Ascending aorta (tissue), 2 donors: ENCODE measurements at regions of chr17 and their contacts with region 1.

Region 1: DNA sequence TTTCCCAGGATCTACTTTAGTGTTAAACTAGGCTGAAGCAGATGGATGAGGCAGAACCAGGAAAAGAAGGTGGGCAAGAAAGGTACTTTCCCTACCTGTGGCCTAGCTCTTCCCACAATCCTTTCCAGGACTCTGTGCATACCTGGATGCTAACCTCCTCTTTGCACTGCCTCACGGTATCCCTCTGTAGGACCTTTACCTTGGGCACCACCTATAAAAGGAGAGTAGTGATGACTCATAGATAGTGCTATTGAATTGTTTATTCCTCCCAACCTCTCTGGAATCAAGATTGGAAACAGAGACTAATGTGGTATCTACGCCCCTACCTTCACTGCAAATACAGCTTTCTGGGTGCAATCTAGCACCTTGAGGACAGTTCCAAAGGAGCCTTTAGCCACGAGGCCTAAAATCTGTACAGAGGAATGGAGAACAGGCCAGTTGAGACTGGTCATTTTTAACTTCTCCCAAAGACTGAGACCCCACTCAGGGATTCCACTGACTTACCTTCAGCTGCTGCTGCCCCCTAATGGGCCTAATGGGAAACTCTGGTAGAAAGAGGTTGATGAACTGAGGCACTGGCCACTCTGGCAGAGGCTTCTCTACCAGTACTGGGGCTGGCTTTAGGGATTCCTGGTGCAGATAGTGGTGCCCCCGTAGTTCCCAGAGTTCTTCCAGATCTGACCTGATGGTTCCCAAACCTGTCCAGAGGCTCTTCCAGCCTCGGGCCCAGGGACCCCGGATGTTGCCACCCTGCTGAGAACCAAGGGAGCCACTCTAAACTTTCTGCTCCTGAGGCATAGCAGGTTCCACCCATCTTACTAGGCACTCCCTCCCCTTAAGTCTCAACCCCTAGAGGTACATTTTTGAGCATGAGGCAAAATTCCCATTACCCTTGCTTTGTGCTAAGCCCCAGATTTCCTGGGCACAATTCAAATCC is 781 bp downstream of the RSKR start:
- DNase-seq: no peak
- H3K4me3 ChIP-seq: no peak overlapping the region
- H3K27ac ChIP-seq: no peak overlapping the region
- H3K4me1 ChIP-seq: no peaks in the 10 kb centered on the region
- H3K27me3 ChIP-seq: no peaks in the 10 kb centered on the region
- CTCF ChIP-seq: peak; percentile 43 to 67 (median 46)

Region 2: DNA sequence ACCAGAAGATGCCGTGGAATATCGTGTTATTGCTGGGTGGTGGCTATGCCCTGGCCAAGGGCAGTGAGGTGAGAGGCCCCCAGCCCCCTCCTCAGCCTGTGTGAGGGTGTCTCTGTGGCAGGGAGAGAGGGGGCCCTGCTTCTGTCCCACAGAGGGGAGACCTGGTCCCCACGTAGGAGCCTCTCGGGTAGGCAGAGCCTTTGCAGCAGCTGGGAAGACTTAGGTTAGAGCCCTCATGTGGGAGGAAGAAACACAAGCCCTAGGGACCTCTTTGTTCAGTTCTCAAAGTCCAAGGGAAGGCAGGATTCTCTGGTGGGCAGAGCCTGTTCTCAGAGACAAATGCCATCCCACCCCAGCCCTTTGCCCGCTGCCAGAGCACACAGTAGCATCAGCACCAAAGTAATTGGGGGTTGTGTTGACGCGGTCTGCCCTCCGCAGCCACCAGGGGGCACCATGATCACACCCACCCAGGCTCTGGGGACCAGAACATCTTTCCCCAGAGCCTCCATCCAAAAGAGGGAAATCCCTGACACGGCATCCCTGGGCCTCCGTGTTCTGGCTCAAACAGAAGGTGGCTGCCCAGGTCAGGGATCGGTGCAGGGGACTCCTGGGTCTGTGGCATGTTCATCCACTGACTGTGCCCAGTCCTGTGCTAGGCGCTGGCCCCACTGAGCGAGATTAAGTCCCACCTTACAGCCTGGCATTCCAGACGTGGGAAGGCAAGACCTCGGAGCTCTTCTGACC is 118.6 kb before region 1 on chr17:
- intact Hi-C with region 1: loop called (anchors 2 kb)
- DNase-seq: peak in 1 of 2 donors; percentile 75
- H3K4me3 ChIP-seq: no peak overlapping the region
- H3K27ac ChIP-seq: no peak overlapping the region
- H3K4me1 ChIP-seq: no peaks in the 10 kb centered on the region
- H3K27me3 ChIP-seq: no peaks in the 10 kb centered on the region
- CTCF ChIP-seq: peak; percentile 64 to 91 (median 69)

Region 3: GRCh38 chr17:28552246-28552999 is 60.8 kb before region 1 on chr17 and contains the start of gene UNC119:
- intact Hi-C with region 1: loop called (anchors 2 kb)
- DNase-seq: peak in 1 of 2 donors; percentile 81
- H3K4me3 ChIP-seq: peak within 1 kb of the TSS; percentile 88 to 90
- H3K27ac ChIP-seq: peak within 1 kb of the TSS; percentile 59 to 73
- H3K4me1 ChIP-seq: peaks cover 3 to 11% of the 10 kb centered on the region in 2 donors
- H3K27me3 ChIP-seq: no peaks in the 10 kb centered on the region
- CTCF ChIP-seq: no peak
- total RNA-seq, gene UNC119: 33.8 TPM

Region 4: GRCh38 chr17:28598799-28599310 is 14.3 kb before region 1 on chr17 and contains the start of gene SPAG5:
- intact Hi-C with region 1: no loop called
- DNase-seq: peak; percentile 81 to 97
- H3K4me3 ChIP-seq: peak within 1 kb of the TSS; percentile 85 to 86
- H3K27ac ChIP-seq: peak within 1 kb of the TSS; percentile 99 to 100
- H3K4me1 ChIP-seq: peaks cover 4 to 6% of the 10 kb centered on the region in 2 donors
- H3K27me3 ChIP-seq: no peaks in the 10 kb centered on the region
- CTCF ChIP-seq: no peak
- total RNA-seq, gene SPAG5: 1.6 TPM